CD14-positive monocyte (primary cell): ENCODE measurements at regions of chr3 and their contacts with region 1.

Region 1: GRCh38 chr3:156674046-156674910 is at the start of gene TIPARP:
- DNase-seq: peak; percentile 99 to 100 (median 99)
- H3K4me3 ChIP-seq: peak within 1 kb of the TSS; percentile 74 to 93 (median 78)
- H3K4me3 Mint-ChIP-seq: peak within 1 kb of the TSS; percentile 95 to 98
- H3K27ac ChIP-seq: peak within 1 kb of the TSS; percentile 73 to 94
- H3K27ac Mint-ChIP-seq: peak within 1 kb of the TSS; percentile 94 to 99 (median 97)
- H3K4me1 ChIP-seq: peaks cover 46 to 66% of the 10 kb centered on the region in 2 donors
- H3K4me1 Mint-ChIP-seq: peaks cover 63% of the 10 kb centered on the region
- H3K27me3 ChIP-seq: no peaks in the 10 kb centered on the region
- H3K27me3 Mint-ChIP-seq: peaks cover 0 to 1% (median 0%) of the 10 kb centered on the region in 3 donors
- CTCF ChIP-seq: peak; percentile 73
- polyA plus RNA-seq, gene TIPARP: 12.7 to 42.5 (median 16.7) TPM

Region 2: GRCh38 chr3:156483961-156484787 is 190.1 kb before region 1 on chr3:
- intact Hi-C with region 1: loop called in 1 of 2 experiments (anchors 10 kb)
- DNase-seq: peak; percentile 69 to 78 (median 70)
- H3K4me3 ChIP-seq: peak overlapping the region in 1 of 3 experiments; percentile 40
- H3K4me3 Mint-ChIP-seq: peak overlapping the region in 1 of 2 donors; percentile 66
- H3K27ac ChIP-seq: peak overlapping the region in 1 of 2 donors; percentile 74
- H3K27ac Mint-ChIP-seq: peak overlapping the region; percentile 79 to 91 (median 87)
- H3K4me1 ChIP-seq: peaks cover 19 to 23% of the 10 kb centered on the region in 2 donors
- H3K4me1 Mint-ChIP-seq: peaks cover 22% of the 10 kb centered on the region
- H3K27me3 ChIP-seq: no peaks in the 10 kb centered on the region
- H3K27me3 Mint-ChIP-seq: no peaks in the 10 kb centered on the region
- CTCF ChIP-seq: no peak

Region 3: GRCh38 chr3:156554842-156555687 is 119.2 kb before region 1 on chr3 and contains the start of gene SSR3:
- intact Hi-C with region 1: loop called (anchors 5 to 10 kb)
- DNase-seq: peak; percentile 97 to 99 (median 98)
- H3K4me3 ChIP-seq: peak within 1 kb of the TSS; percentile 71 to 92 (median 72)
- H3K4me3 Mint-ChIP-seq: peak within 1 kb of the TSS; percentile 96 to 98
- H3K27ac ChIP-seq: peak within 1 kb of the TSS; percentile 28 to 93
- H3K27ac Mint-ChIP-seq: peak within 1 kb of the TSS; percentile 88 to 96 (median 94)
- H3K4me1 ChIP-seq: peaks cover 18 to 28% of the 10 kb centered on the region in 2 donors
- H3K4me1 Mint-ChIP-seq: peaks cover 36% of the 10 kb centered on the region
- H3K27me3 ChIP-seq: no peaks in the 10 kb centered on the region
- H3K27me3 Mint-ChIP-seq: peaks cover 0 to 3% (median 2%) of the 10 kb centered on the region in 3 donors
- CTCF ChIP-seq: peak; percentile 20
- polyA plus RNA-seq, gene SSR3: 46.6 to 243 (median 230) TPM

Region 4: DNA sequence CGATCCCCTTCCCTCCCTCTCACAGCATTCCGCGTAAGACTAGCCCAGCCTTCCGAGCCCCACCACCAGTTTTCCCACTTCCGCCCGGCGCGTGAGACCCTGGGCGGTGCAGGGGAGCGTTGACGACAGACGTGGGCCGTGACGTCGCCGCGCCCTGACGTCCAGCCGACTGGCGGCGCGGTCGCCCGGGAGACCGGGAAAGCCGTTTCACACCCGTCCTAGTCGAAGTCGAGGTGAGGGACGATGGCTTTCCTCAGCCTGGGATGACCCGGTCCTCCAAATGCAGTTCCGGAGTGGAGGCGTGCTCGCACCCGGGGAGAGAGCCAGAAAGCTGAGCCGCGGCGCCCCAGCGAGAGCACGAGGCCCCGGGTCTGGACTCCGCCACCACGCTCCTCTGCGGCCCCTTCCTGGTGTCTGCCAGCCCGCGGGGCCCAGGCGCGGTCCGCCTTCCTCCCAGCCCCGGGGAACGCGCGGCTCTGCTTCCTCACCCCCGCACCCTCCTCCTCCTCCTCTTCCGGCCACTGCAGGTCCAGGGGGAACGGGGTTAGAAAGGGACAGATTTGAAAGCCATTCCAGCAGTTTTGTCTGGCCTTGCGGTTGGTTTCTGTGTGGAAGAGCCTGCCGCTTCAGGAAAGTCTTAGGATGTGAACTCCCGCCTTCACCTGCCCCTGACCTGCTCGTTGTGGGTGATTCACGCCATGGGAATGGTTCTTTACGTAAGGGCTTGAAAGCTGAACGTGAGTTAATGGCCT is 152.0 kb after region 1 on chr3 and contains the start of gene LEKR1:
- intact Hi-C with region 1: loop called in 1 of 2 experiments (anchors 5 kb)
- DNase-seq: peak; percentile 81 to 97 (median 90)
- H3K4me3 ChIP-seq: peak within 1 kb of the TSS; percentile 63 to 80 (median 65)
- H3K4me3 Mint-ChIP-seq: peak within 1 kb of the TSS; percentile 92 to 94
- H3K27ac ChIP-seq: peak within 1 kb of the TSS; percentile 90 to 100
- H3K27ac Mint-ChIP-seq: peak within 1 kb of the TSS; percentile 96 to 99 (median 99)
- H3K4me1 ChIP-seq: peaks cover 11 to 22% of the 10 kb centered on the region in 2 donors
- H3K4me1 Mint-ChIP-seq: peaks cover 15% of the 10 kb centered on the region
- H3K27me3 ChIP-seq: no peaks in the 10 kb centered on the region
- H3K27me3 Mint-ChIP-seq: peaks cover 0 to 2% (median 0%) of the 10 kb centered on the region in 3 donors
- CTCF ChIP-seq: no peak
- polyA plus RNA-seq, gene LEKR1: 0.51 to 0.80 TPM in 2 of 3 donors, not detected in the other

Region 5: DNA sequence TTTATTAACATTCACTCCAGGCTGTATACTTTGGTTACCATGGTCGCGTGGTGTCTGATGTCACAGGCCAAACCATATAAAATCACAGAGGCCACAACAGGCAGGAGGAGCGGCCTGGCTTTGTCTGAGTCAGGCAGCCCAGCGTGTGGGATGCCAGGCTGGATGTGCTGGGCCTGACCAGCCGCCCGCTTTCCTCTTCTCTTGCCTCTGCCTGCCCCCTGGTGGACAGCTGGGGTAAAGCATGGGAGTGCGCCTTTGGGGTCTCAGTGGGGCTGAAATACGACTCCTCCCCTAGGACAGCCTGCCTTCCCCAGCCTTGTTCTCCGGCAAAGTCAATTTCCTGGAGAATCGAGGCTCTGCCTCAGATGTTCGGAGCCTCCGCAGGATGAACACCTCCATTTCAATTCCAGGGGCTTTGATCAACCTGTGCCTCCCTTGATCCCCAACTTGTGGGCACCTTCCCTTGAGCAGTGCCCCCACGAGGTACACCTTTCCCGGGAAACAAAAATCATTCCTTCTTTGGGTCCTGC is 407.5 kb after region 1 on chr3:
- intact Hi-C with region 1: loop called in 1 of 2 experiments (anchors 10 kb)
- DNase-seq: peak; percentile 75 to 94 (median 87)
- H3K4me3 ChIP-seq: no peak overlapping the region
- H3K4me3 Mint-ChIP-seq: no peak overlapping the region
- H3K27ac ChIP-seq: no peak overlapping the region
- H3K27ac Mint-ChIP-seq: peak overlapping the region in 2 of 7 donors; percentile 4 to 15
- H3K4me1 ChIP-seq: no peaks in the 10 kb centered on the region
- H3K4me1 Mint-ChIP-seq: peaks cover 5% of the 10 kb centered on the region
- H3K27me3 ChIP-seq: no peaks in the 10 kb centered on the region
- H3K27me3 Mint-ChIP-seq: peaks cover 3 to 4% (median 4%) of the 10 kb centered on the region in 3 donors
- CTCF ChIP-seq: peak; percentile 99

Region 6: GRCh38 chr3:157130467-157131251 is 456.4 kb after region 1 on chr3:
- intact Hi-C with region 1: loop called in 1 of 2 experiments (anchors 10 kb)
- DNase-seq: peak; percentile 67 to 93 (median 76)
- H3K4me3 ChIP-seq: no peak overlapping the region
- H3K4me3 Mint-ChIP-seq: peak overlapping the region in 1 of 2 donors; percentile 21
- H3K27ac ChIP-seq: no peak overlapping the region
- H3K27ac Mint-ChIP-seq: peak overlapping the region in 5 of 7 donors; percentile 13 to 54 (median 31)
- H3K4me1 ChIP-seq: peaks cover 7 to 10% of the 10 kb centered on the region in 2 donors
- H3K4me1 Mint-ChIP-seq: peaks cover 30% of the 10 kb centered on the region
- H3K27me3 ChIP-seq: no peaks in the 10 kb centered on the region
- H3K27me3 Mint-ChIP-seq: peaks cover 0 to 1% (median 1%) of the 10 kb centered on the region in 3 donors
- CTCF ChIP-seq: peak; percentile 78

Region 7: GRCh38 chr3:157148196-157148889 is 474.1 kb after region 1 on chr3:
- intact Hi-C with region 1: loop called in 1 of 2 experiments (anchors 5 kb)
- DNase-seq: no peak
- H3K4me3 ChIP-seq: no peak overlapping the region
- H3K4me3 Mint-ChIP-seq: no peak overlapping the region
- H3K27ac ChIP-seq: no peak overlapping the region
- H3K27ac Mint-ChIP-seq: peak overlapping the region in 1 of 7 donors; percentile 77
- H3K4me1 ChIP-seq: no peaks in the 10 kb centered on the region
- H3K4me1 Mint-ChIP-seq: no peaks in the 10 kb centered on the region
- H3K27me3 ChIP-seq: no peaks in the 10 kb centered on the region
- H3K27me3 Mint-ChIP-seq: no peaks in the 10 kb centered on the region
- CTCF ChIP-seq: no peak